Psoas muscle (tissue), 8 donors: ENCODE measurements at regions of chr4 and their contacts with region 1.

Region 1: DNA sequence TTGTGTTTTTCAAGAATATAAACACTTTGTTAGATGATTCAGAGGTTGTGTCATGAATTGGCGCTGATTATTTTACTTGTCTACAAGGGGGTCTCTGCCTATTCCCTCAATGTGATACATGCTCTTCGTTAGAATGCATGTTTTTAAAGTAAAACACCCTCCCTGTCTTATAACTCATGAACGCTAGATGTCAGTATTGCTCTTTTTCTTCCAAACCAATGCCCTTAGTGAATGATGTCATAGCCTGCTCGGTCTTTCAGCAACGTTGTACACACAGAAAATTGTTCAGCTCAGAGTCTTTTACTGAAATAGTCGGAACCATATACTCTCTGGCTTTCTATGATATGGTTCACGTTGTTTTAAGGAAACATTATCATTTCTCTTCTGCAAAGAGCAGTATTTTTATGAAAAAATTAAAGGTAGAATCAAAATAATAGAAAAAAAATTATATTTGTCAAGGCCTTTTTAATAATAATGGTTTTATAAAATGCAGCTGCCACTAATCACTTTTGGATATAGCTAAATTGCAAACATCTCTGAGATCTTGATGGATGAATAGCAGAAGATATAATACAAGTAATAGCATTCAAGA is 292.9 kb downstream of the TLL1 start:
- DNase-seq: no peak
- ATAC-seq: peak in 3 of 4 donors; percentile 66 to 73 (median 66)
- H3K4me3 ChIP-seq: no peak overlapping the region
- H3K27ac ChIP-seq: no peak overlapping the region
- H3K4me1 ChIP-seq: no peaks in the 10 kb centered on the region
- H3K27me3 ChIP-seq: no peaks in the 10 kb centered on the region
- CTCF ChIP-seq: peak; percentile 65

Region 2: DNA sequence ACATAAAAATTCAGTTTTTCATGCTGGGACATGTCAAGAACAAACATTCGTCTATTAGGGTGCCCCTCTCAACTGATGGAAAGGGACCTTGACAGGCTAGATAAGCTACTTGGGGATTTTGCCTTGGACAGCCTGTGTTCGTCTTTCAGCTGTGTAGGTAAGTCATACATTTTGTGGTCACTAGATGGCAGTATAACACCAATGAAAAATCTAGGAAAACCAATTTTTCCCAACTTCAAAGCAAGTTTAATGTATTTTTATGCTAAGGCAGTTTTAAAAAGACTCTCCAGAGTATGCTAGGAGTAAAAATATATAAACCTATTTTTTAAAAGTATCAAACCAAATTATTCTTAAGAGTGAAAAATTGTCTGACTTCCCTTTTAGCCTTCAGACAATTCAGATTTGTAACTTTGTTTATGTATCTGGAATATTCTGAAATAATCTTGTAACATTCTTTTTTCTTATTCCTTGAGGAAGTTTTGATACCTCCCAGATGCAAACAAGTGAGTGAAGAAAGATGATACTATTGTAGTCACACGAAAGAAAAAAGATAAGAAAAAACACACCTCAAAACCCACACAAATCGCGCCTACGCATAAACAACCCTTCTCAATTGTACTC is 628.8 kb before region 1 on chr4:
- intact Hi-C with region 1: loop called in 1 of 2 experiments (anchors 5 kb)
- DNase-seq: no peak
- ATAC-seq: peak in 2 of 4 donors; percentile 45 to 60
- H3K4me3 ChIP-seq: no peak overlapping the region
- H3K27ac ChIP-seq: no peak overlapping the region
- H3K4me1 ChIP-seq: no peaks in the 10 kb centered on the region
- H3K27me3 ChIP-seq: peaks cover 0 to 2% (median 0%) of the 10 kb centered on the region in 3 donors
- CTCF ChIP-seq: peak; percentile 80

Region 3: GRCh38 chr4:166073783-166074182 is 92.1 kb before region 1 on chr4:
- intact Hi-C with region 1: no loop called
- DNase-seq: no peak
- ATAC-seq: no peak
- H3K4me3 ChIP-seq: no peak overlapping the region
- H3K27ac ChIP-seq: no peak overlapping the region
- H3K4me1 ChIP-seq: no peaks in the 10 kb centered on the region
- H3K27me3 ChIP-seq: no peaks in the 10 kb centered on the region
- CTCF ChIP-seq: no peak

Region 4: GRCh38 chr4:166252487-166253402 is 86.8 kb after region 1 on chr4:
- intact Hi-C with region 1: loop called in 1 of 2 experiments (anchors 10 kb)
- DNase-seq: no peak
- ATAC-seq: no peak
- H3K4me3 ChIP-seq: no peak overlapping the region
- H3K27ac ChIP-seq: no peak overlapping the region
- H3K4me1 ChIP-seq: no peaks in the 10 kb centered on the region
- H3K27me3 ChIP-seq: no peaks in the 10 kb centered on the region
- CTCF ChIP-seq: peak; percentile 42

Region 5: DNA sequence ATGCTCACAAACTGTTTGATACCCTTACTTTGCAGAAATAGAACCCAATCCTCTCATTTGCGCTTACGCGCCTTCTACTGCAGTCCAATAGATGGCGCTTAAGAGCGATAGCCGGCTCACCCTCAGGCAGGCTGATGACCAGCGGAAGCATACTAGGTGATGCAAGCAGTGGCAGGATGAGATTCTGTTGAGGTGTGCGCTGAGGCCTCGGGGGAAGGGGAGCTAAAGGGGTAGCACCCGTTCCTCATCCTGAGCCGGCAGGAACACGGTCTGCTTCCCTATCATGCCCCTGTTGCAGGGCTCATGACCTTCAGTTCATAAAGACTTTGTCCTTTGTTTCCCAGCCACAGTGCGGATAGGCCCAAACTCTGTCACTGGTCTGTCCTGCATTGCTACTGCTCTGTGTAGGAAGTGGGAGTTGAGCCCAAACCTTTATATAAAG is 336.0 kb after region 1 on chr4:
- intact Hi-C with region 1: no loop called
- DNase-seq: no peak
- ATAC-seq: no peak
- H3K4me3 ChIP-seq: no peak overlapping the region
- H3K27ac ChIP-seq: no peak overlapping the region
- H3K4me1 ChIP-seq: no peaks in the 10 kb centered on the region
- H3K27me3 ChIP-seq: no peaks in the 10 kb centered on the region
- CTCF ChIP-seq: no peak